Activated naive CD4-positive, alpha-beta T cell treated with anti-CD3 and anti-CD28 coated beads for 36 hours (primary cell): ENCODE measurements at regions of chr17 and their contacts with region 1.

Region 1: GRCh38 chr17:55527540-55528118 is 16.4 kb upstream of the SMIM36 start:
- DNase-seq: peak; percentile 56
- H3K4me3 Mint-ChIP-seq: no peak overlapping the region
- H3K27ac Mint-ChIP-seq: no peak overlapping the region
- H3K4me1 Mint-ChIP-seq: no peaks in the 10 kb centered on the region
- H3K27me3 Mint-ChIP-seq: peaks cover 3% of the 10 kb centered on the region

Region 2: GRCh38 chr17:55513885-55514591 is 13.6 kb before region 1 on chr17:
- CTCF ChIA-PET with region 1: interaction called, 20 read pairs
- intact Hi-C with region 1: no loop called
- DNase-seq: peak; percentile 85
- H3K4me3 Mint-ChIP-seq: no peak overlapping the region
- H3K27ac Mint-ChIP-seq: no peak overlapping the region
- H3K4me1 Mint-ChIP-seq: no peaks in the 10 kb centered on the region
- H3K27me3 Mint-ChIP-seq: no peaks in the 10 kb centered on the region

Region 3: GRCh38 chr17:55588446-55589242 is 61.0 kb after region 1 on chr17:
- CTCF ChIA-PET with region 1: interaction called, 6 read pairs
- intact Hi-C with region 1: loop called (anchors 1 kb)
- DNase-seq: no peak
- H3K4me3 Mint-ChIP-seq: no peak overlapping the region
- H3K27ac Mint-ChIP-seq: no peak overlapping the region
- H3K4me1 Mint-ChIP-seq: peaks cover 10% of the 10 kb centered on the region
- H3K27me3 Mint-ChIP-seq: no peaks in the 10 kb centered on the region

Region 4: GRCh38 chr17:55641676-55642081 is 114.0 kb after region 1 on chr17:
- CTCF ChIA-PET with region 1: interaction called, 21 read pairs
- intact Hi-C with region 1: loop called (anchors 1 kb)
- DNase-seq: peak; percentile 70
- H3K4me3 Mint-ChIP-seq: no peak overlapping the region
- H3K27ac Mint-ChIP-seq: no peak overlapping the region
- H3K4me1 Mint-ChIP-seq: peaks cover 5% of the 10 kb centered on the region
- H3K27me3 Mint-ChIP-seq: peaks cover 15% of the 10 kb centered on the region

Region 5: GRCh38 chr17:55735731-55736405 is 208.2 kb after region 1 on chr17:
- CTCF ChIA-PET with region 1: interaction called, 9 read pairs
- intact Hi-C with region 1: loop called (anchors 1 kb)
- DNase-seq: peak; percentile 64
- H3K4me3 Mint-ChIP-seq: no peak overlapping the region
- H3K27ac Mint-ChIP-seq: no peak overlapping the region
- H3K4me1 Mint-ChIP-seq: peaks cover 30% of the 10 kb centered on the region
- H3K27me3 Mint-ChIP-seq: peaks cover 27% of the 10 kb centered on the region

Region 6: GRCh38 chr17:55825213-55825612 is 297.6 kb after region 1 on chr17:
- CTCF ChIA-PET with region 1: interaction called, 4 read pairs
- intact Hi-C with region 1: loop called (anchors 1 kb)
- DNase-seq: peak; percentile 18
- H3K4me3 Mint-ChIP-seq: no peak overlapping the region
- H3K27ac Mint-ChIP-seq: no peak overlapping the region
- H3K4me1 Mint-ChIP-seq: no peaks in the 10 kb centered on the region
- H3K27me3 Mint-ChIP-seq: peaks cover 8% of the 10 kb centered on the region